H1 (cell line): ENCODE measurements at regions of chr7 and their contacts with region 1.

Region 1: DNA sequence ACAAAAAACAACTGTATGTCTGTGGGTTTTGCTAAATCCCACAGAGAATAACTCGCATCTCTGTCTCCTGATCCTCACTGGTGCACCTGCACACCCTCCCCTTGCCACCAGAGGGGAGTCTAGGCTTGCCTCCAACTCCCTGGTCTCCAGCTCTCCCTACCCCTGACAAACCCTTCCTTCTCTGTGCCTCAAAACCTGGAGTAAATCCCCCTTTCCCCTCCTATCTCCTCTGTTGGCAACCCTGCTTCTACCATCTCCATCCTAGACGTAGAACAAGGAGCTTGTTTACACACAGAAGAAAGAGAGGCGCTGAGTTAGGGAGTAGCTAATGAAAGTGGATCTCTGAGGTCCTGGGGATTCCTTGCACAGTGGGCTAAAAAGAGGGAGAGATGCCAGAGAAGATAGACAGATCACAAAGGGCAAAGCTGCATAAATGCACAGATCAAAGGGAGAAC is 6.0 kb downstream of the MBLAC1 start:
- DNase-seq: peak in 1 of 2 experiments; percentile 81
- H3K4me3 ChIP-seq: no peak overlapping the region
- H3K27ac ChIP-seq: no peak overlapping the region
- H3K4me1 ChIP-seq: peaks cover 0 to 8% (median 0%) of the 10 kb centered on the region in 4 experiments; a peak in 2 of 7 replicates
- H3K27me3 ChIP-seq: peaks cover 0 to 11% (median 0%) of the 10 kb centered on the region in 4 experiments; a peak in 2 of 7 replicates
- CTCF ChIP-seq: peak; percentile 92 to 98 (median 97)
- EP300 ChIP-seq: no peak
- POLR2A ChIP-seq: no peak
- RAD21 ChIP-seq: peak; percentile 97 to 98

Region 2: GRCh38 chr7:99665312-99666012 is 467.3 kb before region 1 on chr7:
- CTCF ChIA-PET with region 1: no interaction called
- POLR2A ChIA-PET with region 1: no interaction called
- DNase-seq: no peak
- H3K4me3 ChIP-seq: no peak overlapping the region
- H3K27ac ChIP-seq: no peak overlapping the region
- H3K4me1 ChIP-seq: no peaks in the 10 kb centered on the region
- H3K27me3 ChIP-seq: no peaks in the 10 kb centered on the region
- CTCF ChIP-seq: no peak
- EP300 ChIP-seq: no peak
- POLR2A ChIP-seq: no peak
- RAD21 ChIP-seq: no peak

Region 3: DNA sequence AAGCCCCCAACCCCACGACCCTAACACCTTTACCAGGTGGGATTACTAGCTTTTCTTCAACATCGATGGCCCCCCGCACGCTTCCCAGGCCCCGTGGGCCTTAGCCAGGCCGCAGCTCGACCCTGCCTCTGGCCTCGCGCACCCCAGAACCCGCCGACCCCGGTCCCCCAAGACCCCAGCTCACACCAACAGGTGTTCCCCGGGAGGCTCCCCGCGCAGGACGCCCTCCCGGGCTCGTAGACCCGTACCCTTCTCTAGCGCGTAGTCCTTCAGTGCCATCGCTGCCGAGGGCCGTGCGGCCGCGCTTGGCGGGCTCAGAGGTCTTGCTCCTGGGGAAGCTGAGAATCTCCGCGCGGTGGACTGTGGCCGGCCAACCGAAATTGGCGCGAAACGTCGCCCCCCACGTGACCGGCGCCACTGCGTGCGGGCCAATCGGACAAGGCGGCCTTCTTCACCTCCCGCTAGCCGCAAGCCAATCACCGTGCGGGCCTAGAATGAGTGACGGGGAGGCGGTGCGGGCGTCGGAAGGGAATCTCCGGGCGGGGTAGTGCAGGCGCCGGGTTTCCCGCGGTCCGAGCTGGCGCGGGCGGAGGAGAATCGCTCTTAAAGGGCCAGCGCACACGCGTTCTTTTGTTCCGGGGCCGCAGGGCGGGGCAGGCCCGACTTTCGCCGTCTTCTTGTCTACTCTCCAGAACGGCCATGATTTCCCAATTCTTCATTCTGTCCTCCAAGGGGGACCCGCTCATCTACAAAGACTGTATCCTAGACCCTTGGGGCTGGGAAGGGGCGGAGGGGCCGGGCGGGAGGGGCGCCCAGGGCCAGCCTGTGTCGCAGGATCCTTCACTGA is 31.5 kb before region 1 on chr7 and contains the starts of genes AP4M1 and MCM7:
- CTCF ChIA-PET with region 1: interaction called, 55 read pairs
- POLR2A ChIA-PET with region 1: interaction called, 68 read pairs
- DNase-seq: peak; percentile 94 to 98
- H3K4me3 ChIP-seq: peak within 1 kb of the TSS; percentile 76 to 97 (median 84)
- H3K27ac ChIP-seq: peak within 1 kb of the TSS; percentile 98
- H3K4me1 ChIP-seq: peaks cover 0 to 8% (median 3%) of the 10 kb centered on the region in 4 experiments; a peak in 3 of 7 replicates
- H3K27me3 ChIP-seq: no peaks in the 10 kb centered on the region
- CTCF ChIP-seq: no peak; a peak in 1 of 4 replicates
- EP300 ChIP-seq: no peak
- POLR2A ChIP-seq: peak in 1 of 2 experiments; percentile 77; a peak in 2 of 3 replicates
- RAD21 ChIP-seq: no peak
- total RNA-seq, gene AP4M1: 15.2 and 15.8 TPM in 2 replicates
- total RNA-seq, gene MCM7: 339 and 344 TPM in 2 replicates

Region 4: DNA sequence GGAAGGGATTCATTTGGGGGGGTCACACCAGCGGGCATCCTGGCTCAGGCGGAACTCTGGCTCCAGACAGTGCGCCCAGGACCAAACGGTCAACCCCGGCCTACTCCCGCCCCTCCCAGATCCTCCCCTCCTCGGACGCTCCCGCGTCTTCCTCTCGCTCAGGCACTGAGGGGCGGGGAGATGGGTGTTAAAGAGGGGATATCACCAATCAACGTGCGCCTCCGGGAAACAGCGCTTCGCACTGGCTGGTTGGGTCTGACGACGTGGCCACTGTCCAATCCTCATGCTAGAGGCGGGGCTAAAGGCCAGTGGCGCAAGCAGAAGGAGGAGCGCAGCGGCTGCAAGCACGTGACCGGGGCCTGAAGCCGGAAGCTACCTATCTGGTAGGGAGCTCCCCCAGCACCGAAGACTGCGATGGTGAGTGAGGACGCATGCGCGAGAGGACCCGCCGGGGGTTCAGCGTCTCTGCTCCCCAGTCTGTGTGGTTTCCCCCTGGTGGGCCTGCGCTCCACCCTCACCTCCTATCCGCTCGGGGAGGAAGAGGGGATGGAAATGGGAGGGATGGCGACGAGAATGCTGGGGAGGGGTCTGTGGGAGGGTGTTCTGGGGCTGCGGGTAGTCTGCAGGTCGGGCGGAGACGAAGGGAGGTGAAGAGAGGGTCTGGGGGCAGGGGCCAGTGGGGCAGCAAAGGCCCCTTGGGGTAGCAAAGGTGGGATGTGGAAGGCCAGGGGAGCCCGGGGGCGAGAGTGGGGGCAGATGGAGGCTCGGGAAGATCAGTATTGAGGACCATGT is 16.0 kb after region 1 on chr7 and contains the start of gene LAMTOR4:
- CTCF ChIA-PET with region 1: interaction called, 108 read pairs
- POLR2A ChIA-PET with region 1: interaction called, 10 read pairs
- DNase-seq: peak; percentile 94 to 99
- H3K4me3 ChIP-seq: peak within 1 kb of the TSS; percentile 71 to 89 (median 78)
- H3K27ac ChIP-seq: no peak within 1 kb of the TSS
- H3K4me1 ChIP-seq: peaks cover 0 to 4% (median under 1%) of the 10 kb centered on the region in 4 experiments; a peak in 3 of 7 replicates
- H3K27me3 ChIP-seq: no peaks in the 10 kb centered on the region
- CTCF ChIP-seq: peak in 1 of 3 experiments; percentile 18; a peak in 2 of 4 replicates
- EP300 ChIP-seq: no peak
- POLR2A ChIP-seq: peak; percentile 38 to 69; a peak in 2 of 3 replicates
- RAD21 ChIP-seq: no peak
- total RNA-seq, gene LAMTOR4: 153 and 161 TPM in 2 replicates

Region 5: GRCh38 chr7:100177045-100178001 is 44.6 kb after region 1 on chr7 and contains the starts of genes GPC2 and STAG3:
- CTCF ChIA-PET with region 1: interaction called, 94 read pairs
- POLR2A ChIA-PET with region 1: interaction called, 4 read pairs
- DNase-seq: peak; percentile 97 to 100
- H3K4me3 ChIP-seq: peak within 1 kb of the TSS; percentile 91 to 97 (median 96)
- H3K27ac ChIP-seq: no peak within 1 kb of the TSS
- H3K4me1 ChIP-seq: peaks cover 3 to 7% (median 5%) of the 10 kb centered on the region in 4 experiments; a peak in 6 of 7 replicates
- H3K27me3 ChIP-seq: peaks cover 0 to 13% (median 9%) of the 10 kb centered on the region in 4 experiments; a peak in 6 of 7 replicates
- CTCF ChIP-seq: no peak
- EP300 ChIP-seq: no peak
- POLR2A ChIP-seq: peak in 1 of 2 experiments; percentile 75; a peak in 2 of 3 replicates
- RAD21 ChIP-seq: no peak
- total RNA-seq, gene GPC2: 44.8 and 46.8 TPM in 2 replicates
- total RNA-seq, gene STAG3: 3.3 and 3.8 TPM in 2 replicates

Region 6: GRCh38 chr7:100208911-100209408 is 76.2 kb after region 1 on chr7:
- CTCF ChIA-PET with region 1: interaction called, 104 read pairs
- POLR2A ChIA-PET with region 1: interaction called, 6 read pairs
- DNase-seq: no peak
- H3K4me3 ChIP-seq: no peak overlapping the region
- H3K27ac ChIP-seq: no peak overlapping the region
- H3K4me1 ChIP-seq: peaks cover 0 to 4% (median 2%) of the 10 kb centered on the region in 4 experiments; a peak in 1 of 7 replicates
- H3K27me3 ChIP-seq: peaks cover 0 to 14% (median 5%) of the 10 kb centered on the region in 4 experiments; a peak in 6 of 7 replicates
- CTCF ChIP-seq: no peak
- EP300 ChIP-seq: no peak
- POLR2A ChIP-seq: no peak
- RAD21 ChIP-seq: no peak

Region 7: DNA sequence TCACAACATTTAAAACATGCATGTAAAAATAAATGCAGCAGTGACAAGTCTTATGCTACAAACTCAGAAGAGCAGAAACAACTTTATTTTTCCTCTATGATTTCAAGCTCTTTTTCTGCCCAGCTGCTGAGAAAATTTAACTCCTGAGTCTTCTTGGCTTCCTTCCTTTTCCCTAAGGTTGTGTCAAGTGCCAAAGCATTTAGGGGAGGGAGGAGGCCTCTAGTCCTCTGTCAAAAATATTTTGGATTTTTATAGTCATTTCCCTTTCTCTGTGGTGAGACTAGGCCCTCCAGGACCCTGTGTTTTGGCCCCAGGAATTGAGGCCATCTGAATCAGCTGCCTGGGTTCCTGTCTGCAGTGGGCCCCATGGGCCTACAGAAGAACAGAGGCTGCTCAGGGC is 214.2 kb after region 1 on chr7:
- CTCF ChIA-PET with region 1: interaction called, 27 read pairs
- POLR2A ChIA-PET with region 1: no interaction called
- DNase-seq: no peak
- H3K4me3 ChIP-seq: no peak overlapping the region
- H3K27ac ChIP-seq: no peak overlapping the region
- H3K4me1 ChIP-seq: no peaks in the 10 kb centered on the region
- H3K27me3 ChIP-seq: no peaks in the 10 kb centered on the region
- CTCF ChIP-seq: no peak
- EP300 ChIP-seq: no peak
- POLR2A ChIP-seq: no peak
- RAD21 ChIP-seq: no peak